ENCODE measurements at regions of chr17 and their contacts with region 1.

Region 1: GRCh38 chr17:59300682-59301321 is 30.7 kb upstream of the YPEL2 start:
- DNase-seq: no peak
- ATAC-seq: no peak
- H3K4me3 ChIP-seq: no peak overlapping the region
- H3K27ac ChIP-seq: no peak overlapping the region
- H3K4me1 ChIP-seq: peaks cover 14% of the 10 kb centered on the region in 2 experiments
- H3K27me3 ChIP-seq: no peaks in the 10 kb centered on the region
- CTCF ChIP-seq: no peak
- EP300 ChIP-seq: no peak
- POLR2A ChIP-seq: no peak
- RAD21 ChIP-seq: no peak

Region 2: GRCh38 chr17:59199398-59199797 is 101.4 kb before region 1 on chr17:
- CTCF ChIA-PET with region 1: no interaction called
- POLR2A ChIA-PET with region 1: no interaction called
- in situ Hi-C with region 1: no loop called
- intact Hi-C with region 1: no loop called
- DNase-seq: no peak
- ATAC-seq: no peak
- H3K4me3 ChIP-seq: no peak overlapping the region
- H3K27ac ChIP-seq: no peak overlapping the region
- H3K4me1 ChIP-seq: no peaks in the 10 kb centered on the region
- H3K27me3 ChIP-seq: no peaks in the 10 kb centered on the region
- CTCF ChIP-seq: no peak
- EP300 ChIP-seq: no peak
- POLR2A ChIP-seq: no peak
- RAD21 ChIP-seq: no peak

Region 3: GRCh38 chr17:59641799-59642489 is 341.1 kb after region 1 on chr17:
- CTCF ChIA-PET with region 1: no interaction called
- POLR2A ChIA-PET with region 1: no interaction called
- in situ Hi-C with region 1: loop called (anchors 10 kb)
- intact Hi-C with region 1: no loop called
- DNase-seq: no peak
- ATAC-seq: 0 out of 3 replicates have a peak, but pooled peaks have one; percentile 17
- H3K4me3 ChIP-seq: no peak overlapping the region
- H3K27ac ChIP-seq: no peak overlapping the region
- H3K4me1 ChIP-seq: peaks cover 3 to 7% of the 10 kb centered on the region in 2 experiments
- H3K27me3 ChIP-seq: no peaks in the 10 kb centered on the region
- CTCF ChIP-seq: no peak
- EP300 ChIP-seq: no peak
- POLR2A ChIP-seq: no peak
- RAD21 ChIP-seq: no peak

Measured in K562 (cell line).